Motor neuron (in vitro differentiated cells): ENCODE measurements at regions of chr9 and their contacts with region 1.

Region 1: GRCh38 chr9:19925817-19926503 is 137.1 kb upstream of the SLC24A2 start:
- ATAC-seq: peak; percentile 86 to 92 (median 90)
- H3K4me3 ChIP-seq: peak overlapping the region; percentile 9 to 35 (median 17)
- H3K27ac ChIP-seq: no peak overlapping the region
- H3K4me1 ChIP-seq: peaks cover 8 to 11% of the 10 kb centered on the region in 2 donors

Region 2: DNA sequence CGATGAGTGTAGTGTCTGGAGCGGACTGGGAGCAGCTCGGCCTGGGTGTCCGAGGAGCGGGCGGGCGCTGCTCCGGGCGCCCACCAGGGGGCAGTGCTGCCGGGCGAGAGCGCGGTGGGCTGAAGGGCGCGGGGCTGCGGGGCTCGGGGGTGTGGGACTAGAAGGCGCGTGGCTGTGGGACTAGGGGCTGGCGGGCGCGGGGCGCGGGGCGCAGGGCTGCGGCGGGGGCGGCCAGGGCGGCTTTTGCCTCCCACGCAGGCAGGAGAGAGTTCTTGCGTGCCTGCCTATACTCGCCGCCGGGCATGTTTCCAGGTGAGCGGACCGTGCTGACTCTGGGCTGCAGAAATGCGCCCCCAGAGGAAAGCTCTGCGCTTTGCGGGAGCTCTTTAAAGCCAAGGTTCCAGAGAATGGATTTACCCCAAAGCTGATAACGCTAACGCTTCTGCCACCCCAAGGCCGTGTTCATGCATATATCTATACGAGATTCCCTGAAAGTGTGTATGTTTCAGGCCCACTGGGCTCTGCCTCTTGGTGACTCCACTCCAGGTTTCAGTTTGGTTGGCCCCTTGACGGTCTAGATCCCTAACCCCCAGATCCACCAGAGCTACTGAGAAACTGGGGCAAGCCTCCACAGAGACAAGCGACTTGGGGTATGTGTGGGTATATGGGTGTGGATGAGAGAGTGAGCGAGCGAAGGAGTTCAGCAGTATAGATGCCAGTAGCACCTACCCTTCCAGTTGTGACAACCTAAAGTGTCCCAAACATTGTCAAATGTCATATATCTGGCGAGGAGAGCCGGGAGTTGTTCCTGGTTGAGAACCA is 461.0 kb before region 1 on chr9:
- in situ Hi-C with region 1: loop called in 1 of 9 experiments (anchors 10 kb)
- ATAC-seq: peak; percentile 40 to 99 (median 88)
- H3K4me3 ChIP-seq: peak overlapping the region; percentile 11 to 50 (median 27)
- H3K27ac ChIP-seq: no peak overlapping the region
- H3K4me1 ChIP-seq: no peaks in the 10 kb centered on the region

Region 3: DNA sequence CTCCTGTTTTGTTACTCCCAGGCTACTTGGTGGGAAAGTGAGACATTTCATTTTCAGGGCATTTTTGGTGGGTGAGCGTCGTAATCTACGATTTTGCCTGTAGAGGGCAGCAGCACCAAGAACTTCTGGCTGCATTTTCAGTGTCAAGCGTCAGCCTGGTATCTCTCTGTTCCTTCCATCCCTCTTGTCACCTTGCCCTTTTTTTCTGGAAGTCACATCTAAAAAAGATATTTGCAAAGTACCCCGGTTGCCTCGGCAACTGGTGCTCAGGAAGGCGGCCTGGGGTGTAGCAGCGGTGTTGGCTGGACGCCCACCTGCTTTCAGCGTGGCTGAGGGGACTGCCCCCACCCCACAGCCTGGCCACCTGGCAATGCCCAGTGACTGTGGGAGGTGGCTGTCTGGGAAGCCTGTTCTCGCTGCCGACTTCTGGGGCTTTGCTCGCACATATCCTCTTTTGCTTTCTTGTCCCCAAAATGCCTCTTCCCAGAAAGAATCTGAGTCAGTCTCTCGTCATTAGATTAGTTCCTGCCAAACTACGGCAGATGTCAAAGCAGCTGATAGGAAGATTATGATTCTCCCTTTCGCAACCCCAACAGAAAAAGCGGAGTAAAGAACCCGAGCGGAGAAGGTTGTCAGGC is 432.7 kb before region 1 on chr9:
- in situ Hi-C with region 1: loop called in 8 of 9 experiments (anchors 10 to 25 kb)
- ATAC-seq: peak; percentile 67 to 93 (median 80)
- H3K4me3 ChIP-seq: no peak overlapping the region
- H3K27ac ChIP-seq: no peak overlapping the region
- H3K4me1 ChIP-seq: peaks cover 0 to 4% of the 10 kb centered on the region in 2 donors

Region 4: DNA sequence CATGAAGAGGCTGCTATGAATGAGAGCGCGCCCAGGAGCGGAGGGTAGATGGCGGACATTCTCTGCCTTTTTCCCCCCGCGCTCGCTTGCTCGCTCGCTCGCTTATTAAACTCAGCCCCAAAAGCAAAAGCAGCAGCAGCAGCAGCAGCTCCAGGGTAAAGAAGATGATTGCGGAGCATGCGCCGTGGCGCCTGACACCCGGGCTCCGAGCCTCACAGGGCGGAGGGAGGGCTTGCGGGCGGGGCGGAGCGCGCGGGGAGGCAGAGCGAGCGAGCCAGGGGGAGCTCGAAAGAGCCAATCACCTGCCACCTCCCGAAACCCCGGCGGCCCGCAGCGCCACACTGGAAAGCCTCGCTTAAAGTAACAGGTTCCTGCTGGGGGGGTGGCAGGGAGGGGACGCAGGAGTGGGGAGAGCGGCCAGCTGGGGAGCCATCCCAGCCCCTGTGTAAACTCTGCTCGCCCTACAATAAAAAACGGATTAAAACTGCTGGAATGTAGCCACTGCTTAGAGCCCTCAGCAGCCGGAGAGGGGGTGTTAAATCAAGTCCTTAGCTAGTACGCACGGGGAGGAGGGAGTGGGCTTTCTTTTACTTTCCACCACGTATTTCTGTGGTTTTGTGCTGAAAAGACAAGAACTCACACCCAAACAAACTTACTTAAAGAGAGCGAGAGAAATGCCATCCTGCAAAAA is 696.5 kb after region 1 on chr9 and contains the start of gene MLLT3:
- in situ Hi-C with region 1: loop called in 2 of 9 experiments (anchors 25 kb)
- ATAC-seq: peak; percentile 79 to 90 (median 85)
- H3K4me3 ChIP-seq: peak within 1 kb of the TSS; percentile 57 to 71 (median 69)
- H3K27ac ChIP-seq: peak within 1 kb of the TSS; percentile 56 to 69
- H3K4me1 ChIP-seq: peaks cover 4 to 5% of the 10 kb centered on the region in 2 donors
- total RNA-seq, gene MLLT3: 10.8 to 63.2 (median 31.6) TPM

Region 5: DNA sequence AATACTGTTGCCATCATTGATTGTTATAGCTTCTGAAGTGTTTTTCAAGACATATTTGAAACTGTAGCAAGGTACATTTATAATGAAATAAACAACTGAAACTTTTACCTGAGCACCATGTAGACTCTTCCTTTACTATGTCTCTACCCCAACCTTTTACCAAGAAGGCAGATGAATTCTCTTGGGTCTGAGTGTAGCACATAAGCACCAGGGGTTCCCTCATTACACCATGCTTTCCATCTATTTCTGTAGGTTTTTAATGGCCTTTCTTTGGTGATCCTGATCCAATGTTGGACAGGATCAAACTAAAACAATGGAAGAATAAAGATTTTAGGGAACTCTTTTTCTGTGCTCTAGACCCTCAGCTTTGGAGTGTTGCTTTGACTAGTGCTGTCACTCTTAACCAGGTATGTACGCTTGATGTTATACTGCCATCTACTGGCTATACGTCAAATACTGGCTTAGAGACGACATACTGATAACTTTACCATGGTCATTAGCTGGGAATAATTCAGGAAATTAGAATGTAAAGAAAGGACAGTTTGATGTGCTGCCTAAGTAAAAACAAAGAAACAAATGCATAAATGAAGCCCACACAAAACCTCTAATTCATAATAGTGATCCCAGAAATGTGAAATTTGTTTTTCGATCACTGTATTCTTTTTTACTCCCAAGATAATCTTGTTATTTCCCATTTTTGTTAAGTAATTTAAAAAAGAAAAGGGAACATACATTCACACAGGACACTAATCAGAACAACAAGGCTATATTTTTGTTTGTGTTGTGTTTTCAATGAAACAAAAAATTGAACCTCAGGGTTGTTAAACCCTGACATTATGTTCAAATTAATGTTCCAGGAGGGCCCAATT is 1185.0 kb after region 1 on chr9:
- in situ Hi-C with region 1: loop called in 2 of 9 experiments (anchors 10 to 25 kb)
- ATAC-seq: peak; percentile 75 to 99 (median 90)
- H3K4me3 ChIP-seq: no peak overlapping the region
- H3K27ac ChIP-seq: no peak overlapping the region
- H3K4me1 ChIP-seq: no peaks in the 10 kb centered on the region